Transverse colon (tissue), 4 donors: ENCODE measurements at regions of chr10 and their contacts with region 1.

Region 1: GRCh38 chr10:110137142-110137545 is 70.3 kb upstream of the MXI1 start:
- DNase-seq: no peak
- H3K4me3 ChIP-seq: no peak overlapping the region
- H3K27ac ChIP-seq: peak overlapping the region in 3 of 4 donors; percentile 43 to 55 (median 48)
- H3K4me1 ChIP-seq: peaks cover 9 to 35% (median 21%) of the 10 kb centered on the region in 4 donors
- H3K27me3 ChIP-seq: no peaks in the 10 kb centered on the region
- CTCF ChIP-seq: peak; percentile 74 to 97 (median 77)
- EP300 ChIP-seq: no peak
- POLR2A ChIP-seq: no peak

Region 2: DNA sequence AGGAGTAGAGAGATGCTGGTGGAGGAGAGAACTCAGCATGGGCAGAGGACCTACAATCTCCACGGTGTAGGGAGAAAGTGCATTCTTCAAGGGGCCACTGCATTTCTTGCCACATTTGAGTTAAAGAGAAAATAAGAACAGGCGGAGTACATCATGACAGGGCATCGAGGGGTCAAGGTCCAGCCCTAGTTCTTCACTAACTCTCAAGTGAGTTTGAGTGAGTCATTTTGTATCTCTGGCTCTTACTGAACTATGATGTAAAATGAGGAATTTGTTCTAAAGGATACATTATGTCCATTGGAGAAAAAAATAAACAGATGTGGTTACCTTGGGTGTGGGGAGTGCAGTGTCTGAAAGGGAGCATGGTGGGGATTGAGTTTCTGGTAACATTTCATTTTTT is 396.7 kb before region 1 on chr10:
- in situ Hi-C with region 1: no loop called
- intact Hi-C with region 1: no loop called
- DNase-seq: peak; percentile 11
- H3K4me3 ChIP-seq: no peak overlapping the region
- H3K27ac ChIP-seq: no peak overlapping the region
- H3K4me1 ChIP-seq: peaks cover 4 to 15% (median 11%) of the 10 kb centered on the region in 4 donors
- H3K27me3 ChIP-seq: no peaks in the 10 kb centered on the region
- CTCF ChIP-seq: no peak
- EP300 ChIP-seq: no peak
- POLR2A ChIP-seq: no peak

Region 3: GRCh38 chr10:110192552-110192951 is 55.4 kb after region 1 on chr10:
- in situ Hi-C with region 1: no loop called
- intact Hi-C with region 1: loop called (anchors 5 kb)
- DNase-seq: no peak
- H3K4me3 ChIP-seq: no peak overlapping the region
- H3K27ac ChIP-seq: no peak overlapping the region
- H3K4me1 ChIP-seq: peaks cover 0 to 19% (median 3%) of the 10 kb centered on the region in 4 donors
- H3K27me3 ChIP-seq: no peaks in the 10 kb centered on the region
- CTCF ChIP-seq: no peak
- EP300 ChIP-seq: no peak
- POLR2A ChIP-seq: no peak

Region 4: GRCh38 chr10:110218632-110219031 is 81.5 kb after region 1 on chr10:
- in situ Hi-C with region 1: loop called in 1 of 4 experiments (anchors 5 kb)
- intact Hi-C with region 1: no loop called
- DNase-seq: no peak
- H3K4me3 ChIP-seq: no peak overlapping the region
- H3K27ac ChIP-seq: no peak overlapping the region
- H3K4me1 ChIP-seq: peaks cover 15 to 65% (median 26%) of the 10 kb centered on the region in 4 donors
- H3K27me3 ChIP-seq: no peaks in the 10 kb centered on the region
- CTCF ChIP-seq: no peak
- EP300 ChIP-seq: no peak
- POLR2A ChIP-seq: no peak

Region 5: GRCh38 chr10:110279407-110279986 is 142.4 kb after region 1 on chr10:
- in situ Hi-C with region 1: loop called (anchors 5 to 10 kb)
- intact Hi-C with region 1: loop called (anchors 5 kb)
- DNase-seq: peak; percentile 55
- H3K4me3 ChIP-seq: no peak overlapping the region
- H3K27ac ChIP-seq: no peak overlapping the region
- H3K4me1 ChIP-seq: peaks cover 0 to 10% (median 0%) of the 10 kb centered on the region in 4 donors
- H3K27me3 ChIP-seq: no peaks in the 10 kb centered on the region
- CTCF ChIP-seq: peak; percentile 69 to 84 (median 70)
- EP300 ChIP-seq: no peak
- POLR2A ChIP-seq: no peak

Region 6: GRCh38 chr10:110285501-110285900 is 148.4 kb after region 1 on chr10:
- in situ Hi-C with region 1: loop called (anchors 5 to 10 kb)
- intact Hi-C with region 1: no loop called
- DNase-seq: no peak
- H3K4me3 ChIP-seq: no peak overlapping the region
- H3K27ac ChIP-seq: no peak overlapping the region
- H3K4me1 ChIP-seq: no peaks in the 10 kb centered on the region
- H3K27me3 ChIP-seq: no peaks in the 10 kb centered on the region
- CTCF ChIP-seq: no peak
- EP300 ChIP-seq: no peak
- POLR2A ChIP-seq: no peak

Region 7: DNA sequence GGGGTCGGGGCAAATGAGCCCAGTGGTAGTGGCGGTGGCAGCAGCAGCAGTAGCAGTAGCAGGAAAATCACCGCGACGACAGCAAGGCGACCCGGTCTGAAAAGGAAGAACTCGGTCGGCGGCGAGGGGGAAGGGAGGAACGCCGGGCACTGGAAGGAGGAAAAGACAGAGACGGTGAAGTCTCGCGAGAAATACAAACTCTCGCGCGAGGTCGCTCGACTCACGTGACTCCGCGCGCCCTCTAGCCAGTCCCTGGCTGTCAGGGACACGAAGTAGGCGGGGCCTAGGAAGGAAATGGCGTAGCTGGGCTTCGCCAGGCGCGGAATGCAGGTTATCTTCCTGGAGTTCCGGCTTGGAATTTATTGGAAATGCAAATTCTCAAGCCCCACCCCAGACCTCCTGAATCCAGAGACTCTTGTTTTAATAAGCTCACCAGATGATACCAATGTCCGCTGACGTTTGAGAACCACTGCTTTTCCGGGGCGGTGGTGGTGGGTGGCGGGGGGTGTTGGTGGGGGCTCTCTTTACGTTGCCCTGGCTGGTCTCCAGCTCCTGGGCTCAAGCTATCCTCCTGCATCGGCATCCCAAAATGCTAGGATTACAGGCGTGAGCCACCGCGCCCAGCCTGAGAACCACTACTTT is 167.8 kb after region 1 on chr10 and contains the start of gene SMNDC1:
- in situ Hi-C with region 1: no loop called
- intact Hi-C with region 1: no loop called
- DNase-seq: peak; percentile 99
- H3K4me3 ChIP-seq: peak within 1 kb of the TSS; percentile 78 to 99 (median 95)
- H3K27ac ChIP-seq: peak within 1 kb of the TSS; percentile 92 to 98 (median 96)
- H3K4me1 ChIP-seq: peaks cover 8 to 54% (median 23%) of the 10 kb centered on the region in 4 donors
- H3K27me3 ChIP-seq: peaks cover 3% of the 10 kb centered on the region
- CTCF ChIP-seq: no peak
- EP300 ChIP-seq: no peak
- POLR2A ChIP-seq: peak; percentile 81
- total RNA-seq, gene SMNDC1: 3.6 to 15.7 (median 8.9) TPM

Region 8: DNA sequence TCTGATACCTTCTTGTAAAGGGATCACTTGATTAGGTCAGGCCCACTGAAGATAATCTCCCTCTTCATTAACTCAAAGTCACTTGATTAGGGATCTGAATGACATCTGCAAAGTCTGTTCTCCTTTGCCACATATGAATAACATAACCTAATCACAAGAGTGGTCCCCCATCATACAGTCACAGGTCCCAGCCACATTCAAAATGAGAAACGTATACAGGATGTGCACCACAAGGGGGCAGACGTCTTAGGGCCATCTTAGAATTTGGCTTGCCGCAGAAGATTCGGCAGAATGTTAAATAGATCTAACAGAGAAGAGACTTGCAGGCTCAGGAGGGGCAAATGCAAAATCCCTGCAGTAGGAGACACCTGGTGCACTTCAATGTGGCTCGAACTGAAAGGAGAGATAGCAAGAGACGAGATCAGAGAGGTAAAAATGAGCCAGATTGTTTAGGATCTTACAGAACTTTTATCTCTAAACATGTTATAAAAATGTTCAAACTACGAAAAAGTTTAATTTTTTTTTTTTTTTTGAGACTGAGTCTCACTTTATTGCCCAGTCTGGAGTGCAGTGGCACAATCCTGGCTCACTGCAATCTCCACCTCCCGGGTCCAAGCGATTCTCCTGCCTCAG is 419.9 kb after region 1 on chr10:
- in situ Hi-C with region 1: loop called in 2 of 4 experiments (anchors 10 to 25 kb)
- intact Hi-C with region 1: no loop called
- DNase-seq: peak; percentile 40
- H3K4me3 ChIP-seq: no peak overlapping the region
- H3K27ac ChIP-seq: no peak overlapping the region
- H3K4me1 ChIP-seq: peaks cover 0 to 8% (median 2%) of the 10 kb centered on the region in 4 donors
- H3K27me3 ChIP-seq: no peaks in the 10 kb centered on the region
- CTCF ChIP-seq: peak; percentile 25 to 52 (median 48)
- EP300 ChIP-seq: no peak
- POLR2A ChIP-seq: no peak

Region 9: DNA sequence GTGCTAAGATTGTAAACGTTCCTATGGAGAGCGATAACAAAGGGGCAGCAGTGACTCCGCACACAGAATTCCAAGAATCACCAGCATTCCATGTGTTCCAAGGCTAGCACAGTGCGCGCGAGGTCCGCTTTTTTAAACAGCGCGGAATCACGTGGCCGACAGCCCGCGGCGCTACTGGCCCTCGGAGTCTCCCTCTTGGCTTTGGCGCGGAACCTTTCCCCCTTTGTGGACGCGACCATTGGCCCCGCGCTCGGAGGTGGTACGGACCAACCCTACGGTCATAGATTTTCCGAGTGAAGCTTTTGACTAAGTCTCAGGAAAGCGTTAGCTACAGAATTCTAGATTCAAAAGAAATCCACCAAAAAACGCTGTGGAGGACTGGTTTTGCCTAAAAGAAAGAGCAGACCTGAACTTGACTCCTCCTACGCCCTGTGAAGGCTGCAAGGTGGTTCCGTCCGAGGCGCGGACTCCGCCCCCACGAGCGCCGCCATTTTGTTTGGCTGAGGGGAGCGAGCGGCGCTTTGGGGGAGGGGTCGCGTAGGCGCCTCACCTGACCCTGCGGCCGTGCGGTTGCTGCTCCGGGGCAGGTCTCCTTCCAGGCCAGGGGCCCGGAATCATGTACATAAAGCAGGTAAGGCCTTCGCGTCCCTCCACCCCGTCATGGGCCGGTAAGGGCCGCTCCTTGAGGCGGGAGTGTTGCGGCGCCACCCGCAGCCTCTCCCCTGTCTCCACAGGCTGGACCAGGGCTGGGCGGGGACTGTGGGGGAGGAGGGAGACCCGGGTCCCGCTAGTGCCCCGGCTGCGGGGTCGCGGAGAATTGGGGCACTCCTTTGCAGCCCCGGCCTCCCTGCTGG is 430.3 kb after region 1 on chr10 and contains the start of gene SMC3:
- in situ Hi-C with region 1: loop called in 1 of 4 experiments (anchors 25 kb)
- intact Hi-C with region 1: no loop called
- DNase-seq: peak; percentile 91
- H3K4me3 ChIP-seq: peak within 1 kb of the TSS; percentile 79 to 94 (median 83)
- H3K27ac ChIP-seq: peak within 1 kb of the TSS; percentile 90 to 95 (median 92)
- H3K4me1 ChIP-seq: peaks cover 8 to 40% (median 15%) of the 10 kb centered on the region in 4 donors
- H3K27me3 ChIP-seq: peaks cover 9% of the 10 kb centered on the region
- CTCF ChIP-seq: peak in 1 of 5 experiments; percentile 13
- EP300 ChIP-seq: no peak
- POLR2A ChIP-seq: peak; percentile 52
- total RNA-seq, gene SMC3: 16.8 to 31.9 (median 21.1) TPM